ENCODE measurements at regions of chr4 and their contacts with region 1.

Region 1: DNA sequence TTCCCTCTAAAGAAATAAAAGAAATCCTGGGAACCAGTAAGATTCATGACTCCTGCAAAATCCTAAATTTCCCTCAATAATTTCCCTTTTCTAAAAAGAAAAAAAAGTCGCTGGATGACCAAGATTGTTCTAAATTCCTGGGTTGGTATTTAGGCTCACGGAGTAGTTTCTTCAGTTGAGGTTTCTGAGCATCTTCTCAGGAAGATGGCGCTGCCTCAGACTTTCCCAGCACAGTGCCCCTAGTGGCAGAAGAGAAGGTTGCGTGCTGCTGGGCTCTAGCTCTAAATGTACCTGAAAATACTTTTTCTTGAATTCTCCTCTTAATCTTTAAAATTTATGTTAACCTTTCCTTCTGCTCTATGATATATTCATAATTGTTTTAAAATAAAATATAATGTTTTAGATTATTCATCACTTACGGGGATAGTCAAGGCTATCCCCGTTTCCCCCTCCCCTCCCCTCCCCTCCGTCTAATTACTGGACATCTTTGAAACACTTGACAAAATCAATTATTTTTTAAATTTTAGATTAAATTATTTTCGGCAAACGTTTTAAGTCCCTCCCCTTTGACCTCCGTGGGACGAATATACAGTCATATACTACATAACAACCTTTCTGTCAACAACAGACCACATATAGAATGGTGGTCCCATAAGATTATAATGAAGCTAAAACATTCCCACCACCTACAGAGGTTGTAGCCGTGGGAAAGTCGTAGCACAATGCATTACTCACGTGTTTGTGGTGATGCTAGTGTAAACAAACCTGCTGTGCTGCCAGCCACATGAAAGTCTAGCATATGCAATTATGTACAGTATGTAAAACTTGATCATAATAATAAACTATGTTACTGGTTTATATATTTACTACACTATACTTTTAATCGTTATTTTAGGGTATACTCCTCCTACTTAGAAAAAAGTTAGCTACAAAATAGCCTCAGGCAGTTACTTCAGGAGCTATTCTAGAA is 41.0 kb upstream of the GATB start:
- DNase-seq: no peak
- ATAC-seq: peak; percentile 66
- H3K4me3 ChIP-seq: no peak overlapping the region
- H3K27ac ChIP-seq: no peak overlapping the region
- H3K4me1 ChIP-seq: peaks cover 7% of the 10 kb centered on the region; the same call in 1 of the 2 replicates
- H3K27me3 ChIP-seq: no peaks in the 10 kb centered on the region
- CTCF ChIP-seq: peak; percentile 64 to 90 (median 80)
- EP300 ChIP-seq: no peak
- POLR2A ChIP-seq: no peak
- RAD21 ChIP-seq: peak; percentile 51

Region 2: DNA sequence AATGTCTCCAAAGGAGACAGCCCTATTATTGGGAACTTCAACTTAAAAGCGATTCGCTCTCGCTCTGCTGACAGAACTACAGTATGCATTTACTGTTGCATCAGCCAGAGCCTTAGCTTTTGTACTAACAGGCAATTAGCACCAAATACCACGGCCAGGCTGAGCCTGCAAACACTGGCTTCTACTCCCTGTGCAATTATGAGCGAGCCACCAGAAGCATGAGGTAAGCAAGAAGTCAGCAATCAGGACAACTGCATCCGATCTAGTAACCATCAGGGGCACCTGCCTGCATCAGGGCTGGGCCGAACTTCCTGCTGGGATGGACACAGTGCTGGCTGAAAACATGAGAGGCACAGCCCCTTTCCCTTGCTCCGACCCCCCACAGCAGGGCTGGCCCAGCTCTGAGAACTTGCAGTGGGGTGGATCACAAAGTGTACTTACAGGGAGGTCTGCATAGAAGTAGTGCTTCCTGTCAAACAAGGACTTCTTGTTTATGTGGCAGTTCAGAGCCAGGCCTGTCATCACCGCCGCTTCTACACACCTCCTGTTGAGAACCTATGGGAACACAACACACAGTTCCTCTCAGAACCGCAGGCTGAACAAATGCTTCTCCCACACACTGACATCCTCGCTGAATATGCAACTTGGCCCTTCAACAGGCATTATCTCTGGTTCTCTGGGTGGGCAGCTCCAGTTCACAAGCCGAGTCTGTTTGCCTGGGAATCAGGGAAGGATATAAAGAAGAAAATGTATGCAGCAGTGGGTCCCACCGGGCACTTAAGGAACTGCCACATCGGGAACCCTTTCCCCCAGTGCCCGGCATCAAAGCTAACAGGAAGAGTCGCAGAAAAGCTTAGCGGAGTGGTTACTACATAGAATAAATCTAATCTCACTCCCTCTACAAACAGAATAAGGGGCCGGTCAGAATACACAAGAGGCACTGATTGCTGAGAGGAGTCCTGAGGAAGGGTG is 82.6 kb before region 1 on chr4:
- CTCF ChIA-PET with region 1: no interaction called
- POLR2A ChIA-PET with region 1: no interaction called
- RAD21 ChIA-PET with region 1: no interaction called
- SMC1A ChIA-PET with region 1: no interaction called
- in situ Hi-C with region 1: no loop called
- intact Hi-C with region 1: no loop called
- DNase-seq: no peak
- ATAC-seq: no peak
- H3K4me3 ChIP-seq: no peak overlapping the region
- H3K27ac ChIP-seq: no peak overlapping the region
- H3K4me1 ChIP-seq: no peaks in the 10 kb centered on the region; the same call in 1 of the 2 replicates
- H3K27me3 ChIP-seq: no peaks in the 10 kb centered on the region
- CTCF ChIP-seq: no peak
- EP300 ChIP-seq: no peak
- POLR2A ChIP-seq: no peak
- RAD21 ChIP-seq: no peak

Region 3: DNA sequence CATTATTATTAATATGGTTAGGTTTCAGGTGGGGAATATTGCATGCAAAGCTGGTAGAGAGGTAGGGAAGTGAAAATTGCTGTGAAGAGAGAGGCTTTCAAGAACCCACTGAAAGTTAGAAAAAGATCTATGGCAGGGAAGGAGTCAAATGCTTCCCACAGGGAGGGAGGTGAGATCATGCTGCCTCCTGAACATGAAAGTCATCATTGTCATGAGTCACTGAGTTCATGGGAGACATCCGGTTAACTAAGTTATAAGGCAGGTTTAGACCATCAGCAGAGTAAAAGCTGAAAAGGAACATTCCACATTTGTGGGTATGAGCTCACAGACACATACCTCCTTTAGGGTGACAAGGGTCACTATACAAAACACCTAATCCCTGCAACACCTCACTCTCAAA is 57.2 kb before region 1 on chr4:
- CTCF ChIA-PET with region 1: interaction called, 3 read pairs
- POLR2A ChIA-PET with region 1: no interaction called
- RAD21 ChIA-PET with region 1: no interaction called
- SMC1A ChIA-PET with region 1: interaction called, 9 read pairs
- in situ Hi-C with region 1: no loop called
- intact Hi-C with region 1: loop called (anchors 2 kb)
- DNase-seq: peak; percentile 44
- ATAC-seq: peak; percentile 66
- H3K4me3 ChIP-seq: no peak overlapping the region
- H3K27ac ChIP-seq: peak overlapping the region; percentile 73
- H3K4me1 ChIP-seq: peaks cover 23% of the 10 kb centered on the region
- H3K27me3 ChIP-seq: no peaks in the 10 kb centered on the region
- CTCF ChIP-seq: no peak
- EP300 ChIP-seq: peak in 1 of 2 experiments; percentile 67; a peak in 1 of 4 replicates
- POLR2A ChIP-seq: no peak
- RAD21 ChIP-seq: no peak

Region 4: GRCh38 chr4:151781026-151781425 is 20.8 kb before region 1 on chr4:
- CTCF ChIA-PET with region 1: interaction called, 10 read pairs
- POLR2A ChIA-PET with region 1: interaction called, 3 read pairs
- RAD21 ChIA-PET with region 1: no interaction called
- SMC1A ChIA-PET with region 1: interaction called, 5 read pairs
- in situ Hi-C with region 1: no loop called
- intact Hi-C with region 1: no loop called
- DNase-seq: no peak
- ATAC-seq: no peak
- H3K4me3 ChIP-seq: no peak overlapping the region
- H3K27ac ChIP-seq: no peak overlapping the region
- H3K4me1 ChIP-seq: no peaks in the 10 kb centered on the region
- H3K27me3 ChIP-seq: no peaks in the 10 kb centered on the region; a peak in 1 of 4 replicates
- CTCF ChIP-seq: no peak
- EP300 ChIP-seq: no peak
- POLR2A ChIP-seq: no peak
- RAD21 ChIP-seq: no peak

Region 5: GRCh38 chr4:151820002-151820401 is 18.2 kb after region 1 on chr4:
- CTCF ChIA-PET with region 1: interaction called, 11 read pairs
- POLR2A ChIA-PET with region 1: no interaction called
- RAD21 ChIA-PET with region 1: no interaction called
- SMC1A ChIA-PET with region 1: interaction called, 3 read pairs
- in situ Hi-C with region 1: no loop called
- intact Hi-C with region 1: no loop called
- DNase-seq: no peak
- ATAC-seq: no peak
- H3K4me3 ChIP-seq: no peak overlapping the region
- H3K27ac ChIP-seq: no peak overlapping the region
- H3K4me1 ChIP-seq: no peaks in the 10 kb centered on the region
- H3K27me3 ChIP-seq: no peaks in the 10 kb centered on the region
- CTCF ChIP-seq: no peak
- EP300 ChIP-seq: no peak
- POLR2A ChIP-seq: no peak
- RAD21 ChIP-seq: no peak

Region 6: DNA sequence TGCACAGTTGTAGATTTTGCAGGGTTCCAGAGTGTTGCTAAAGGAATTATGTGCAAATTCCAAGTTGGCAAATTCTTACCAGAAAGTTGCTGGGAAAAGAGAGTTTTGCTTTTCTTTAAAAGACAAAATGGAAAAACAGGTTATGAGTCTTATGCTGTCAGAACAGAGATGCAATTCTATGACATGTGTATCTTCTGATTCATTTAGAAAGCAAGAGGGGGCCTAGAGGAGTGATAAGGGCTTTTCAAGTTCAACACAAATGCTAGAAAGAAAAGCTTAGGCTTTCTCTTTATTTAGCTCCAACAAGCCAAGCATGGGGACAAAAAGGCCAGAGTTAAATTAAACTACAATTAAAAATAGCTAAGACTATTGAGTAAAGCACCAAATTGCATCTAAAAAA is 31.3 kb after region 1 on chr4:
- CTCF ChIA-PET with region 1: interaction called, 10 read pairs
- POLR2A ChIA-PET with region 1: no interaction called
- RAD21 ChIA-PET with region 1: interaction called, 4 read pairs
- SMC1A ChIA-PET with region 1: interaction called, 3 read pairs
- in situ Hi-C with region 1: no loop called
- intact Hi-C with region 1: no loop called
- DNase-seq: no peak
- ATAC-seq: peak; percentile 74
- H3K4me3 ChIP-seq: no peak overlapping the region
- H3K27ac ChIP-seq: no peak overlapping the region
- H3K4me1 ChIP-seq: peaks cover 4% of the 10 kb centered on the region; the same call in 1 of the 2 replicates
- H3K27me3 ChIP-seq: no peaks in the 10 kb centered on the region
- CTCF ChIP-seq: no peak
- EP300 ChIP-seq: 0 out of 4 replicates have a peak, but pooled peaks of 1 of the 2 experiments have one; percentile 14
- POLR2A ChIP-seq: no peak
- RAD21 ChIP-seq: 0 out of 2 replicates have a peak, but pooled peaks have one; percentile 8

Region 7: DNA sequence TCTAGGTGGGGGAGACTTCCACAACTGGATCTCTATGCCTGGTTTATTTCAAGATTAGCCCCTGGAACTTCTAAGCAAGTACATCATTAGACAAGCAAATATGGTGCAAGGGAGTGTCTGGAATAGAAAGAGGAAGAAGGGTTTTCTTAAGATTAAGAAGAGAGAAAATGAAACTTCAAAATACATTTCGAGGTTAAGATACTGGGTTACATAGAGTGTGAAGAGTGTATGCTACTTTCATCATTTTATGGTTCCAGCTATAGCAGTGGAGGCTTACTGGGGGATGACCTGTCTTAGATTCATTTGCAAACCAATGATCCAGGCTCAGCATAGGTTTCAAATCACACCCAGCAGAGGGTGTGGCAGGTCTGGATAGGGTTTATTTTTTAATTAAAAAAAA is 103.4 kb after region 1 on chr4:
- CTCF ChIA-PET with region 1: interaction called, 4 read pairs
- POLR2A ChIA-PET with region 1: no interaction called
- RAD21 ChIA-PET with region 1: interaction called, 3 read pairs
- SMC1A ChIA-PET with region 1: no interaction called
- in situ Hi-C with region 1: no loop called
- intact Hi-C with region 1: loop called (anchors 5 kb)
- DNase-seq: peak; percentile 33
- ATAC-seq: peak; percentile 96
- H3K4me3 ChIP-seq: no peak overlapping the region
- H3K27ac ChIP-seq: no peak overlapping the region
- H3K4me1 ChIP-seq: peaks cover 14% of the 10 kb centered on the region; the same call in 1 of the 2 replicates
- H3K27me3 ChIP-seq: no peaks in the 10 kb centered on the region
- CTCF ChIP-seq: no peak
- EP300 ChIP-seq: no peak
- POLR2A ChIP-seq: no peak
- RAD21 ChIP-seq: no peak

Region 8: DNA sequence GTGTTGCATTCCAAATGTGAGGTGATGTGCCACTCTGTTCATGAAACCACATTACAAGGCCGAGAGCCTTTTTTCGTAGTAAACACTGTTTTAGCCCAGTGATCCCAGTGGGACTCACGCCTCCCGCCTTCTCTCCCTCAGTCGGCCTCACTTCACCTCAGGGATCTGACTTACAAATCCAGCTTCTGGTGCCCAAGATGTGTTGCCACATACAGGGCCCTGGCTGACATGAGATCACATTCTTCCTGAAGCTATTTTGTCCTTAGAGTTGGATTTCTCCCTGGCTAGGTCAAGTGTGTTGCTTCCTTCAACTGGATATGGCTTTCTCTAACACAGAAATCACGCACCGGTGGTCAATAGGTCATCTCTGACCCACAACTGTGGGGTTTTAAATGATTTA is 379.3 kb after region 1 on chr4:
- CTCF ChIA-PET with region 1: no interaction called
- POLR2A ChIA-PET with region 1: no interaction called
- RAD21 ChIA-PET with region 1: no interaction called
- SMC1A ChIA-PET with region 1: no interaction called
- in situ Hi-C with region 1: no loop called
- intact Hi-C with region 1: loop called (anchors 5 kb)
- DNase-seq: no peak
- ATAC-seq: no peak
- H3K4me3 ChIP-seq: no peak overlapping the region
- H3K27ac ChIP-seq: no peak overlapping the region
- H3K4me1 ChIP-seq: no peaks in the 10 kb centered on the region
- H3K27me3 ChIP-seq: no peaks in the 10 kb centered on the region
- CTCF ChIP-seq: no peak
- EP300 ChIP-seq: no peak
- POLR2A ChIP-seq: no peak
- RAD21 ChIP-seq: no peak